Heart left ventricle (tissue), 16 donors: ENCODE measurements at regions of chr19 and their contacts with region 1.

Region 1: DNA sequence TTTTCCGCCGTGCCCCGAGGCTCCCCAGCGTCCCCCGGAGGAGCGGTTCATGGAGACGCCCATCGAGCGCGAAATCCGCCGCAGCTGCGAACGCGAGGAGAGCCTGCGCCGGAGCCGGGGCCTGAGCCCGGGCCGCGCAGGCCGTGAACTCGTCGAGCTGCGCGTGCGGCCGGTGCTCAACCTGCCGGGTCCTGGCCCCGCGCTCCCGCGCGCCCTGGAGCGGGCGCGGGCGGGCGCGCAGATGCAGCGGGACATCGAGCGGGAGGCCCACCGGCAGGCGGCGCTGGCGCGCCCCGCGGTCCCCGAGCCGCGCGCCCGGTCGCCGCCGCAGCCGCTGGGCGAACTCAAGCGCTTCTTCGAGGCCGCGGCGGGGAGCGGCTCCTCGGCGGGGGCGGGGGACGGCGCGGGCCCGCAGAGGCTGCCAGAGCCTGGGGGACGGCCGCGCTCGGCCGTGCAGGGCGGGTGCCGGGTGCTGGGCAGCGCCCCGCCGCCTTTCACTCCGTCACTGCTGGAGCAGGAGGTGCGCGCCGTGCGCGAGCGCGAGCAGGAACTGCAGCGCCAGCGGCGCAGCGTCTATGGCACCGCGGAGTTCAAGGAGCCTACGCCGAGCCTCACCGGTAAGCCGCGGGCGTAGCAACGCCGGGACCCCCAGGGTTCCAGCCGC is 807 bp downstream of the MISP3 start:
- DNase-seq: peak; percentile 77 to 89 (median 82)
- ATAC-seq: peak; percentile 13 to 62 (median 53)
- H3K4me3 ChIP-seq: peak overlapping the region; percentile 56 to 89 (median 74)
- H3K27ac ChIP-seq: peak overlapping the region; percentile 69 to 98 (median 91)
- H3K4me1 ChIP-seq: peaks cover 0 to 47% (median 25%) of the 10 kb centered on the region in 12 donors
- H3K27me3 ChIP-seq: no peaks in the 10 kb centered on the region
- CTCF ChIP-seq: peak in 10 of 12 donors; percentile 19 to 89 (median 47)
- POLR2A ChIP-seq: peak in 1 of 2 donors; percentile 38

Region 2: GRCh38 chr19:13597640-13598039 is 475.8 kb before region 1 on chr19:
- intact Hi-C with region 1: loop called in 2 of 10 experiments (anchors 10 kb)
- DNase-seq: peak in 4 of 5 donors; percentile 26 to 54 (median 42)
- ATAC-seq: peak; percentile 75 to 83 (median 78)
- H3K4me3 ChIP-seq: no peak overlapping the region
- H3K27ac ChIP-seq: no peak overlapping the region
- H3K4me1 ChIP-seq: no peaks in the 10 kb centered on the region
- H3K27me3 ChIP-seq: peaks cover 0 to 52% (median 0%) of the 10 kb centered on the region in 9 donors
- CTCF ChIP-seq: peak; percentile 34 to 73 (median 64)
- POLR2A ChIP-seq: no peak

Region 3: GRCh38 chr19:13880059-13881043 is 193.0 kb before region 1 on chr19:
- intact Hi-C with region 1: loop called (anchors 1 to 2 kb)
- DNase-seq: peak; percentile 97 to 99 (median 97)
- ATAC-seq: peak; percentile 94 to 98 (median 96)
- H3K4me3 ChIP-seq: peak overlapping the region in 10 of 12 donors; percentile 13 to 47 (median 34)
- H3K27ac ChIP-seq: peak overlapping the region in 11 of 12 donors; percentile 29 to 83 (median 73)
- H3K4me1 ChIP-seq: peaks cover 0 to 35% (median 24%) of the 10 kb centered on the region in 12 donors
- H3K27me3 ChIP-seq: no peaks in the 10 kb centered on the region
- CTCF ChIP-seq: peak; percentile 99 to 100 (median 99)
- POLR2A ChIP-seq: peak in 1 of 2 donors; percentile 58

Region 4: DNA sequence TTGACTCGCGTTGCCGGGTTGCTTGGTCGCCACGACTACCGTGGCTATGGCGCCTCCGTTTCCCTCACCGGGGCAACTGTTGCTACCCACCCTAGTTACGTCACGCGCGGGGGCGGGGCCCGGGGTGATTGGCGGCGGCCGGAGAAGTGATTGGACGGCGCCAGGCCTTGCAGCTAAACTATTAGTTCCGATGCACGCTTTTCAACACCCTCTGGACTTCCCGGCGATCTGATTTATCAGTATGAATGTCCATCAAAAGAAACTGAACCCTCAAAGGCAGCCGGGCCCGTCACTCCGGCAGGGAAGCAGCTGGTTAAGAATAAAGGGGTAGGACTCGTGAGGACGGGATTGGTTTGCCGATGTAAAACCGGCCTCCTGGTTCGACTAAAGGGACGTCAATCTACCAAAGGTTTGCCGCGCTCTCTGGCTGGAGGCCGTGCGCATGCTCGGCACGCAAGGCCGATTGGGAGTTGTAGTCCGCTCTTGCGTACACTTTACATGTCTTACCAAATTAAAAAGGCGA is 67.1 kb before region 1 on chr19 and contains the start of gene RFX1:
- intact Hi-C with region 1: loop called in 1 of 10 experiments (anchors 1 kb)
- DNase-seq: peak; percentile 100
- ATAC-seq: peak; percentile 87 to 93 (median 91)
- H3K4me3 ChIP-seq: peak within 1 kb of the TSS; percentile 63 to 99 (median 86)
- H3K27ac ChIP-seq: peak within 1 kb of the TSS; percentile 96 to 100 (median 98)
- H3K4me1 ChIP-seq: peaks cover 0 to 47% (median 31%) of the 10 kb centered on the region in 12 donors
- H3K27me3 ChIP-seq: no peaks in the 10 kb centered on the region
- CTCF ChIP-seq: no peak
- POLR2A ChIP-seq: no peak
- total RNA-seq, gene RFX1: 6.0 to 15.4 (median 11.6) TPM

Region 5: DNA sequence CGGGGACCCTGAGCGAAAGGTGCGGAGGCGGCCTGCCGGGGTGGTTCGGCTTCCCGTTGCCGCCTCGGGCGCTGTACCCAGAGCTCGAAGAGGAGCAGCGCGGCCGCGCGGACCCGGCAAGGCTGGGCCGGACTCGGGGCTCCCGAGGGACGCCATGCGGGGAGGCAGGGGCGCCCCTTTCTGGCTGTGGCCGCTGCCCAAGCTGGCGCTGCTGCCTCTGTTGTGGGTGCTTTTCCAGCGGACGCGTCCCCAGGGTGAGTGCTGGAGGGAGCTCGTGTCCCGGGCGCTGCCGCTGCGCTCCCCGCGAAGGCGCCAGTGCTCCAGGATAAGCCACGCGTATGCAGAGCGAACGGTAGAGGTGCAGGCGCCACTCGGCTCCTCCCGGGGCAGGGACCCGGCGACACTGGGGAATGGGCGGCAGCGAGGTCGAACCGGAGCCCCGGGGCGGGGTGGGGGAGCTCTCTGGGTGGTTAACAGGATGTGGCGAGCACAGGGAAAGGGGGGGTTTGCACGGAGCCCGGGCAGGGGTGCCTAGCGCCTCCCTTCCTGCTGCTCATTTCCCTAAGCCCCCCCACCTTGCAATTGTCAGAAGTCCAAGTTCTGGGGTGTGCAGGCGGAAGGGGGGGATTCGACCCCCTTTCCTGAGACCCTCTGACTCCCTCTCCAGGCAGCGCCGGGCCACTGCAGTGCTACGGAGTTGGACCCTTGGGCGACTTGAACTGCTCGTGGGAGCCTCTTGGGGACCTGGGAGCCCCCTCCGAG is 41.5 kb before region 1 on chr19 and contains the start of gene IL27RA:
- intact Hi-C with region 1: no loop called
- DNase-seq: peak; percentile 69 to 85 (median 75)
- ATAC-seq: peak; percentile 76 to 88 (median 83)
- H3K4me3 ChIP-seq: peak within 1 kb of the TSS; percentile 60 to 85 (median 70)
- H3K27ac ChIP-seq: peak within 1 kb of the TSS; percentile 76 to 97 (median 90)
- H3K4me1 ChIP-seq: peaks cover 0 to 17% (median 8%) of the 10 kb centered on the region in 12 donors
- H3K27me3 ChIP-seq: peaks cover 0 to 7% (median 0%) of the 10 kb centered on the region in 9 donors
- CTCF ChIP-seq: peak; percentile 47 to 73 (median 62)
- POLR2A ChIP-seq: peak in 1 of 2 donors; percentile 51
- total RNA-seq, gene IL27RA: 2.4 to 8.2 (median 4.2) TPM

Region 6: DNA sequence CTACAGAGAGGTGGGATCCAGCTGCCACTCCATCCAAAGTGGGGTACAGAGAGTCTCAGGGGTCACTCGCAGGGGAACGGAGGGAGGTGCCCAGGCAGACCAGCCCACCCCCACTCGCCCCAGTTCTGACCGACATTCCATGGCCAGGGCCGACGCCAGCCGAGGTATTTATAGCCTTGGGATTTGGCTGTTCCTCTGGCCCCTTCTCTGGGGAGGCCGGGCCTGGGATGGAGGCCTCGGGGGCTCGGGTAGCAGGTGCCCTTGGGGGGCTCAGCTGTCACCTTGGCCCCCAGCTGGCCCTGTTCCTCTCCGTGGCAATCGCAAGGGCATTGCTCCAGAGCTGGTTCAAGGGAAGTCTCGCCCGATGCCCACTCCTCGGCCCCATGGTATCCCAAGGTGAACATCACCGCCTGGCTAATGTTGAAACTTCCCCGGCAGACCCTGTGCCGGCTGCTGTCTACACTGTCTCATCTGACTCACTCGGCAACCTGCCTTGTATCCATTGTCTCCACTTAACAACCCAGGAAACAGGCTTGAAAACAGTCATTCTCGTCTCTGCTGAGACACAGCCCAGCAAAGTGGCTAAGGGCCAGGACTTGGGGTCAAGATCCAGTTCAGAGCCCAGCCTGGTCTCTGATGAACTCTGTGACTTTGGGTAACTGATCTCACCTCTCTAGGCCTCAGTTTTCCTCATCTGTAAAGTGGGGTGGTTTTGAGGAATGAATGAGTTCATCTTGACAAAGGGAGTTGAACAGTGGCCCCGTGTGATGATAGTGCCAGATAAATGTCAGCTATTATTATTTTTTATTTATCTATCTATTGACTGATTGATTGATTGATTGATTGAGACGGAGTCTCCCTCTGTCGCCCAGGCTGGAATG is 34.4 kb after region 1 on chr19:
- intact Hi-C with region 1: no loop called
- DNase-seq: peak; percentile 76 to 90 (median 83)
- ATAC-seq: peak; percentile 87 to 92 (median 89)
- H3K4me3 ChIP-seq: peak overlapping the region in 3 of 12 donors; percentile 12 to 21 (median 13)
- H3K27ac ChIP-seq: peak overlapping the region; percentile 75 to 99 (median 92)
- H3K4me1 ChIP-seq: peaks cover 10 to 68% (median 33%) of the 10 kb centered on the region in 12 donors
- H3K27me3 ChIP-seq: no peaks in the 10 kb centered on the region
- CTCF ChIP-seq: no peak
- POLR2A ChIP-seq: no peak

Region 7: GRCh38 chr19:14136509-14137281 is 63.3 kb after region 1 on chr19 and contains the start of gene ASF1B:
- intact Hi-C with region 1: loop called in 5 of 10 experiments (anchors 2 to 5 kb)
- DNase-seq: peak; percentile 99 to 100 (median 99)
- ATAC-seq: peak; percentile 92 to 96 (median 94)
- H3K4me3 ChIP-seq: peak within 1 kb of the TSS; percentile 43 to 97 (median 78)
- H3K27ac ChIP-seq: peak within 1 kb of the TSS; percentile 70 to 97 (median 93)
- H3K4me1 ChIP-seq: peaks cover 0 to 47% (median 28%) of the 10 kb centered on the region in 12 donors
- H3K27me3 ChIP-seq: no peaks in the 10 kb centered on the region
- CTCF ChIP-seq: peak; percentile 75 to 100 (median 88)
- POLR2A ChIP-seq: peak in 1 of 2 donors; percentile 80
- total RNA-seq, gene ASF1B: 0.42 to 7.0 (median 0.91) TPM

Region 8: GRCh38 chr19:14218620-14219330 is 145.4 kb after region 1 on chr19:
- intact Hi-C with region 1: no loop called
- DNase-seq: no peak
- ATAC-seq: no peak
- H3K4me3 ChIP-seq: no peak overlapping the region
- H3K27ac ChIP-seq: no peak overlapping the region
- H3K4me1 ChIP-seq: peaks cover 0 to 7% (median 0%) of the 10 kb centered on the region in 12 donors
- H3K27me3 ChIP-seq: no peaks in the 10 kb centered on the region
- CTCF ChIP-seq: no peak
- POLR2A ChIP-seq: no peak

Region 9: GRCh38 chr19:14835041-14835453 is 761.7 kb after region 1 on chr19 and contains the starts of genes OR7A5 and OR7C1:
- intact Hi-C with region 1: no loop called
- DNase-seq: no peak
- ATAC-seq: peak in 2 of 4 donors; percentile 32 to 45
- H3K4me3 ChIP-seq: no peak within 1 kb of the TSS
- H3K27ac ChIP-seq: peak within 1 kb of the TSS in 4 of 12 donors; percentile 16 to 55 (median 23)
- H3K4me1 ChIP-seq: no peaks in the 10 kb centered on the region
- H3K27me3 ChIP-seq: peaks cover 0 to 6% (median 0%) of the 10 kb centered on the region in 9 donors
- CTCF ChIP-seq: no peak
- POLR2A ChIP-seq: no peak
- total RNA-seq, gene OR7A5: not detected
- total RNA-seq, gene OR7C1: 0.02 to 0.28 (median 0.17) TPM in 3 of 9 donors, not detected in the others